Activated T-helper 1 cell treated with anti-CD3 and anti-CD28 coated beads, Interleukin-12 subunit alpha, Interleukin-12 subunit beta, Interleukin-2, Interleukin-4 antibody, amounts not matched to agents 30 ng/mL and 10 ng/mL and 1 ng/mL, durations not matched to agents 14 hours and 24 hours and 36 hours (primary cell): ENCODE measurements at regions of chr7 and their contacts with region 1.

Region 1: DNA sequence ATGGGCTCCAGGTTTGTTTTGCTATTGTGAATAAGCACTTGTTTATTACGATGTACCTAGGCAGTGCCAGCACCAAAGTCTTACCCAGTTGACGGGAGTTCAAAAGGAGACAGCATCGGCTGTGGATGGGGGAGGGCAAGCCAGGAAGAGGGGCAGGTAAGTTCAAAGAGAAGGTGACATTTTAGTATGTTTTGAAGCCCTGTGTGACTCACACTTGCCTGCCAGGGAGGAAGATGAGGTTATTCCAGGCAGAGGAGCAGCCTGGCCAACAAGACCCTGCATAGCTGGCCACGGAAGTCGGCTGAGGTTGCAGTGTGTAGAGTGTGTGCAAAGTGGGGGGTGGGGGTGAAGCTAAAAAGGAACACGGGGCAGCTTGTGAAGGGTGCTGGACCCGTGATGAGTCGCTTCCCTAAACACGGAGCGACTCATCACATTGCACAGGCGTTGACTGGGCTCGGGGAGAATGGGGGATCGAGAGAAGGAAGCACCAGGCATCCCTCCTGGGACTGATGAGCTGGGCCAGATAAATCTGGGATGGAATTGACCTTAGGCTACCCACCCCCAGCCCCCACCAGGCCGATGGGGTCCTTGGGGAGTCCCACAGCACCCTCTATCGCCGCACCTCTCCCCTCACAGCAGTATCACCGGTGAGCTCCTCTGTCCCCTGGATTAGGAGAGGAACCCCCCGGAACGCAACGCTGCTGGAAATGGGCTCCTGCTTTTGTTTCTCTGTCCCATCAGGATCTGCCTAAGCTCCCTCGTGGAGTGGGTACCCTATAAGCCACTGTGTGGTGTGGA is 97.9 kb upstream of the IKZF1 start:
- DNase-seq: peak; percentile 65
- H3K4me3 Mint-ChIP-seq: peak overlapping the region; percentile 68
- H3K27ac Mint-ChIP-seq: peak overlapping the region; percentile 93
- H3K4me1 Mint-ChIP-seq: peaks cover 98% of the 10 kb centered on the region
- H3K27me3 Mint-ChIP-seq: no peaks in the 10 kb centered on the region

Region 2: GRCh38 chr7:50119815-50120637 is 86.6 kb before region 1 on chr7:
- intact Hi-C with region 1: no loop called
- DNase-seq: peak; percentile 13
- H3K4me3 Mint-ChIP-seq: no peak overlapping the region
- H3K27ac Mint-ChIP-seq: no peak overlapping the region
- H3K4me1 Mint-ChIP-seq: no peaks in the 10 kb centered on the region
- H3K27me3 Mint-ChIP-seq: peaks cover 33% of the 10 kb centered on the region

Region 3: GRCh38 chr7:50142425-50143017 is 64.1 kb before region 1 on chr7:
- intact Hi-C with region 1: loop called (anchors 1 kb)
- DNase-seq: no peak
- H3K4me3 Mint-ChIP-seq: peak overlapping the region; percentile 27
- H3K27ac Mint-ChIP-seq: peak overlapping the region; percentile 2
- H3K4me1 Mint-ChIP-seq: peaks cover 34% of the 10 kb centered on the region
- H3K27me3 Mint-ChIP-seq: peaks cover 11% of the 10 kb centered on the region

Region 4: DNA sequence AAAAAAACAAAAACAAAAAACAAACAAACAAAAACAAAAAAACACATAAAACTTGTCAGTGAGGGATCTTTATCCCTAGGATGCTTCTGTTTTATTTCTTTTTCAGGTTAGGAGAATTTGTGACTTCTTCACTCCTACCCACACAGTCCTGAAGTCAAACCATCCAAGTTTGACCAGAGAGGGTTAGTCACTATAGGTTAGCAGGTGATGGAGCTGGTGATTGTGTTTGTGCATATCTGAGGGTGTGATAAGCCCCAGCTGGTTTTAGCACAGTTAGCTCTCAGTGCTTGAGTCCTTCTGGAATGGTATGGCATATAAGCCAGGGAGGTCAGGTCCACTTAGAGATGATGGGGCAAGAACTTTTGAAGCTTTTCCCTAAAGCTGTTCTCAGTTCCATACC is 86.1 kb after region 1 on chr7:
- intact Hi-C with region 1: loop called (anchors 1 kb)
- DNase-seq: no peak
- H3K4me3 Mint-ChIP-seq: no peak overlapping the region
- H3K27ac Mint-ChIP-seq: peak overlapping the region; percentile 24
- H3K4me1 Mint-ChIP-seq: peaks cover 35% of the 10 kb centered on the region
- H3K27me3 Mint-ChIP-seq: peaks cover 8% of the 10 kb centered on the region

Region 5: DNA sequence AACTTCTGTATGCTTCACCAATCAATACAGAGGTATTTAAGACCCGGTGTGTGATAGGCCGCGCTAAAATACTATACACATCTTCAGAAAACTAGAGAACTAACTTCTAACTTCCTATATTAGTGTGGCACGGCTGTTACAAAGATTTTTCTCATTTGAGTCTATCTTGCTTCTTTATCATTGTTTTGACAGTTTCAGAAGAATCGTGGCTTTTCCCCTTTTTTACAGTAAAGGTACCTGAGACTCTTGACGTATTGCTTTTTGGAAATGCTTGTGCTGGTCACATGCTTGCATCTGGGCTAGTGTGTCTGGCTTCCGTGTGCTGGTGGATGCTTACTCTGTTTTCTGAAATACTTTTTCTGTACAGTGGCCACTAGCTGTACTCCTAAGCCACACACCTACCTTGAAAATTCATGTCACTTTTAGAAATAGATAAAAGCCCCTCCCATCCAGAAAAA is 110.6 kb after region 1 on chr7:
- intact Hi-C with region 1: loop called (anchors 1 kb)
- DNase-seq: peak; percentile 53
- H3K4me3 Mint-ChIP-seq: peak overlapping the region; percentile 82
- H3K27ac Mint-ChIP-seq: peak overlapping the region; percentile 93
- H3K4me1 Mint-ChIP-seq: peaks cover 100% of the 10 kb centered on the region
- H3K27me3 Mint-ChIP-seq: no peaks in the 10 kb centered on the region

Region 6: GRCh38 chr7:50349963-50350944 is 143.6 kb after region 1 on chr7:
- intact Hi-C with region 1: loop called (anchors 1 kb)
- DNase-seq: peak; percentile 77
- H3K4me3 Mint-ChIP-seq: peak overlapping the region; percentile 53
- H3K27ac Mint-ChIP-seq: peak overlapping the region; percentile 93
- H3K4me1 Mint-ChIP-seq: peaks cover 97% of the 10 kb centered on the region
- H3K27me3 Mint-ChIP-seq: no peaks in the 10 kb centered on the region

Region 7: GRCh38 chr7:50397320-50397970 is 190.8 kb after region 1 on chr7:
- intact Hi-C with region 1: loop called (anchors 1 kb)
- DNase-seq: peak; percentile 56
- H3K4me3 Mint-ChIP-seq: peak overlapping the region; percentile 21
- H3K27ac Mint-ChIP-seq: peak overlapping the region; percentile 92
- H3K4me1 Mint-ChIP-seq: peaks cover 74% of the 10 kb centered on the region
- H3K27me3 Mint-ChIP-seq: no peaks in the 10 kb centered on the region

Region 8: GRCh38 chr7:50664461-50664922 is 457.8 kb after region 1 on chr7:
- intact Hi-C with region 1: loop called (anchors 5 kb)
- DNase-seq: no peak
- H3K4me3 Mint-ChIP-seq: no peak overlapping the region
- H3K27ac Mint-ChIP-seq: no peak overlapping the region
- H3K4me1 Mint-ChIP-seq: peaks cover 58% of the 10 kb centered on the region
- H3K27me3 Mint-ChIP-seq: peaks cover 3% of the 10 kb centered on the region

Region 9: DNA sequence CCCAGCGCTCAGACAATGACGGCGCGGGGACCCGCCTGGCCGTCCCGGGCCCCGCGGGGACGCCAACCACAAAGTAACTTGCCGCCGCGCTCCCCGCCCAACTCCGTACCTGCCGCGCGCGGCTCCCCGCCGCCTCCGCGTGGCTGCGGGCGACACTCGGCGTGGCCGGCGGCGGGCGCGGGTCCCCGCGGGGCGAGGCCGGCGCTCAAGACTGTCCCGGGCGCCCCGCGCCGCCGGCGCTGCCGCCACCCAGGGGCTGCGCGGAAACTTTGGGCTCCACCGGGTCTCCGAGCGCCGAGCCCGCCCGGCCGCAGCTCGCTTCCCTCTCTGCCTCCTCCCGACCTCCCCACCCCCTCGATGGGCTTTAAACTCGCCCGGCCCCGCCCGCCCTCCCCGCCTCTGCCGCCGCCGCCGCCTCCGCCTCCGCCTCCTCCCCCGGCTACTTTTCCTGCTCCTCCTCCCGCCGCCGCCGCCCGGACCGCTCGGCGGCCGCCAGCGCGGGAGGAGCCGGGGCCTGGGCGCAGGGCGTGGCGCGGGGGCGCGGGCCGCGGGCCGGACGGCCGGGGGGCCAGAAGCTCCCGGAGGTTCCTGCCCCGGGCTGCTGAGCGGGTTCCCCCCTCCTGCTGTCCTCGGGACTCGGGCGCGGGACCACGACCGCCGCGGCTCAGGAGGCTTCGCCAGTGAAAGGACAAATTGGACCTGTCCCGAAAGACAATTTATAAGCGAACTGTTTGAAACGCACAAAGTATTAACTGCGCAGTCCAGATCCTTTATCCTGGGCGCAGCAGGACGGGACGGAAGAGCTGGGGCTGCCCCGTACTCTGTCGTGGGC is 586.7 kb after region 1 on chr7:
- intact Hi-C with region 1: no loop called
- DNase-seq: peak; percentile 9
- H3K4me3 Mint-ChIP-seq: peak overlapping the region; percentile 67
- H3K27ac Mint-ChIP-seq: no peak overlapping the region
- H3K4me1 Mint-ChIP-seq: peaks cover 13% of the 10 kb centered on the region
- H3K27me3 Mint-ChIP-seq: peaks cover 76% of the 10 kb centered on the region